ENCODE measurements at regions of chr11 and their contacts with region 1.

Region 1: DNA sequence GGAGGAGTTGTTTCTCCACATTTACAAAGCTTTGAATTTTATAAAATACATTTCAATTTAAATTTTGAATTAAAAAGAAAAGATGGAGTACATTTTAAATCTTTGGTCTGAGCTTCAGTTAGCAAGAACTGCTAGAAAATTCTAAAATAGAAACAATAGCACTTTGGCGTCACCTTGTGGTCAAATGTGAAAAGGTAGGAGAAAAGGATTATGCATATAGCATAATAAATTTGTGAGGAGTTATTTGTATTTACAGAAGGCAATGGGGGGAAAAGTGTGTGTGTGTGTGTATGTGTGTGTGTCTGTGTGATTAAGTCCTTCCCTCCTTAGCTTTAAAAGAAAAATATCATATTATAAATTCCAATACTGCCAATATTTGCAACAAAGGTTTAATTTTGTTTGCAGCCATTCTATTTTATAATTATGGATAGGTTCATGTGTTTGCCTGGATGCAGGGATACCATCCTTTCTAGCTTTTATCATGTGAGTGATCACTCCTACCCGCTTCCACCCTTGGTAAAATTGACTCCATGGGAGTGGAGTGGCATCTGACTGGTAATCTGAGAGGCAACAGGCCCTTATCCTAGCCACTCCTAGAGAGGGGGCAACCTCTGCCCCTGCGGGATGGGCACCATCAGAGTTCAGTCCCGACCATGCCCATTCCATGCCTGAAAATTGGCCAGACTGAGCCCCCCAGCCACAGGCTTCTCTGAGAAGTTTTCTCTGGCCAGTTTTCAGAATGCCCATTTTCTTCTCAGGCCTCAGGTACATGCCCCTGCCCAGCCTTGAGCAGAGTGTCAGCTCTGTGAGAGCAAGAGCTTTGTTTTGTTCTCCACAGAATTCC is 13.6 kb upstream of the LGR4 start:
- DNase-seq: peak; percentile 75
- H3K4me3 ChIP-seq: no peak overlapping the region
- H3K27ac ChIP-seq: no peak overlapping the region
- H3K4me1 ChIP-seq: no peaks in the 10 kb centered on the region
- H3K27me3 ChIP-seq: no peaks in the 10 kb centered on the region
- CTCF ChIP-seq: peak; percentile 54 to 63
- POLR2A ChIP-seq: no peak

Region 2: GRCh38 chr11:27158722-27159679 is 327.2 kb before region 1 on chr11:
- CTCF ChIA-PET with region 1: interaction called, 20 read pairs
- POLR2A ChIA-PET with region 1: no interaction called
- dilution Hi-C with region 1: no loop called
- intact Hi-C with region 1: no loop called
- DNase-seq: peak; percentile 70
- H3K4me3 ChIP-seq: no peak overlapping the region
- H3K27ac ChIP-seq: no peak overlapping the region
- H3K4me1 ChIP-seq: no peaks in the 10 kb centered on the region
- H3K27me3 ChIP-seq: no peaks in the 10 kb centered on the region
- CTCF ChIP-seq: peak; percentile 54 to 70
- POLR2A ChIP-seq: no peak

Region 3: GRCh38 chr11:27201454-27202236 is 284.5 kb before region 1 on chr11:
- CTCF ChIA-PET with region 1: interaction called, 47 read pairs
- POLR2A ChIA-PET with region 1: no interaction called
- dilution Hi-C with region 1: loop called (anchors 25 kb)
- intact Hi-C with region 1: loop called (anchors 1 kb)
- DNase-seq: no peak
- H3K4me3 ChIP-seq: no peak overlapping the region
- H3K27ac ChIP-seq: no peak overlapping the region
- H3K4me1 ChIP-seq: no peaks in the 10 kb centered on the region
- H3K27me3 ChIP-seq: peaks cover 36 to 61% of the 10 kb centered on the region in 2 experiments
- CTCF ChIP-seq: no peak
- POLR2A ChIP-seq: no peak

Region 4: GRCh38 chr11:27296497-27296896 is 189.7 kb before region 1 on chr11:
- CTCF ChIA-PET with region 1: interaction called, 137 read pairs
- POLR2A ChIA-PET with region 1: no interaction called
- dilution Hi-C with region 1: no loop called
- intact Hi-C with region 1: loop called (anchors 2 kb)
- DNase-seq: peak; percentile 66
- H3K4me3 ChIP-seq: no peak overlapping the region
- H3K27ac ChIP-seq: no peak overlapping the region
- H3K4me1 ChIP-seq: no peaks in the 10 kb centered on the region
- H3K27me3 ChIP-seq: peaks cover 24% of the 10 kb centered on the region in 2 experiments
- CTCF ChIP-seq: peak; percentile 50 to 56
- POLR2A ChIP-seq: no peak

Region 5: DNA sequence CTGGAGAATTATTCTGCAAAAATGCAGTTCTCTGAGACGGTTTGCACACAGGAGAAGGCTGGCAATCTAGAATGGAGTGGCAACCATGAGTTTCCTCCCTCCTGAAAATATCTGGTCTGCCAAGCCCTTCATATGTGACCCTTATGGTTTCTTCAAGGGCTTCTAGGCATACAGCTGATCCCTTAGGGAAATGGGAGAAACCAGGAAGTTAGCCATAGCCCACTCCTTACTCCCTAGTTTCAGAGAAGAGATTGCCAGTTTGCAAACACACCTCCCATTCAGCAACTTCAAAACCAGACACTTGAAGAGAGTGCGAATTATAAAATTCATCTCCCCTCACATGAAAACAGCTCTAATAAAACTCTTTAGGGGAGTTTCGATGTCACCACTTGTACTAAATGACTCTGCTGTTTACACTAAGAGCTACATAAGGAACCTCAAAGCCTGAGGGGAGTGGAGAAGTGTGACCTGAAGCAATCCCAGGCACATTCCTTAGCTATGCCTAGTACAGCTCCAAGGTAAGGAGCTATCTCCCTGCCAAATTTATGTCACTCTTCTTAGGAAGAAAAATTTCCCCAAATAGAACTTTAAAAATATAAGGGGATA is 21.9 kb before region 1 on chr11:
- CTCF ChIA-PET with region 1: interaction called, 11 read pairs
- POLR2A ChIA-PET with region 1: no interaction called
- dilution Hi-C with region 1: no loop called
- intact Hi-C with region 1: no loop called
- DNase-seq: no peak
- H3K4me3 ChIP-seq: no peak overlapping the region
- H3K27ac ChIP-seq: no peak overlapping the region
- H3K4me1 ChIP-seq: peaks cover 18% of the 10 kb centered on the region
- H3K27me3 ChIP-seq: no peaks in the 10 kb centered on the region
- CTCF ChIP-seq: no peak
- POLR2A ChIP-seq: no peak

Region 6: GRCh38 chr11:27545946-27546345 is 59.8 kb after region 1 on chr11:
- CTCF ChIA-PET with region 1: no interaction called
- POLR2A ChIA-PET with region 1: no interaction called
- dilution Hi-C with region 1: no loop called
- intact Hi-C with region 1: no loop called
- DNase-seq: no peak
- H3K4me3 ChIP-seq: no peak overlapping the region
- H3K27ac ChIP-seq: no peak overlapping the region
- H3K4me1 ChIP-seq: no peaks in the 10 kb centered on the region
- H3K27me3 ChIP-seq: no peaks in the 10 kb centered on the region
- CTCF ChIP-seq: no peak
- POLR2A ChIP-seq: no peak

Measured in endothelial cell of umbilical vein (primary cell).